Activated naive CD4-positive, alpha-beta T cell treated with anti-CD3 and anti-CD28 coated beads, Interleukin-2, amount 10 ng/mL, durations not matched to agents 7 days and 5 days (primary cell): ENCODE measurements at regions of chr10 and their contacts with region 1.

Region 1: GRCh38 chr10:114470956-114471905 is 66.9 kb upstream of the AFAP1L2 start:
- DNase-seq: peak; percentile 74
- H3K4me3 Mint-ChIP-seq: no peak overlapping the region
- H3K27ac Mint-ChIP-seq: peak overlapping the region; percentile 0
- H3K4me1 Mint-ChIP-seq: peaks cover 33% of the 10 kb centered on the region
- H3K27me3 Mint-ChIP-seq: no peaks in the 10 kb centered on the region

Region 2: GRCh38 chr10:114458955-114459354 is 12.3 kb before region 1 on chr10:
- CTCF ChIA-PET with region 1: interaction called, 11 read pairs
- DNase-seq: peak; percentile 34
- H3K4me3 Mint-ChIP-seq: no peak overlapping the region
- H3K27ac Mint-ChIP-seq: no peak overlapping the region
- H3K4me1 Mint-ChIP-seq: peaks cover 4% of the 10 kb centered on the region
- H3K27me3 Mint-ChIP-seq: no peaks in the 10 kb centered on the region

Region 3: DNA sequence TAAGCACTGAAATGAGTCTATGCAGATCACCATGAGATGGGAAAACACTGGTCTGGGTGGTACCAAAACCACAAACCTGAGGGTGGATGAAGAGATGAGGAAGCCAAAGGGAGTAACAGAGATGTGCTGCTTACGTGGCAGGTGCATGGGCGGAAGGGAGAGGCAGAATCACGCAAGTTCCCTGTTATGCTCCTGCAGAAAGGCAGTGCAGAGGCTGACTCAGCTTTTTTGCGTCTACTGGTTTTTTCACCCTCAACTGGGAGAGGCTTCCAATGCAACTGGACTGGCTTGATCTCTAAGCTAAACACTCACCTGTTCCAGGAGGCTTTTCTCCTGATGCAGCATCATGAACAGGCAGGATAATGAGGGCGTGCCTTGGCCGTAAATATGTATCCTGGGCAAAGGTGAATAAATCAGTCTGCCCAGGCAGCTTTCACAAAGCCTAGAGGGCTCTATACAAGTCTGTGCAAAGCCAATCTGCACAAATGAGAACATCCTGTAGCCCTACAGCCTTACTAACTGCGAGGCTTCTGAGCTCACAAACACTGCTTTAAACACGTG is 28.5 kb after region 1 on chr10:
- CTCF ChIA-PET with region 1: interaction called, 14 read pairs
- DNase-seq: peak; percentile 73
- H3K4me3 Mint-ChIP-seq: peak overlapping the region; percentile 31
- H3K27ac Mint-ChIP-seq: peak overlapping the region; percentile 92
- H3K4me1 Mint-ChIP-seq: peaks cover 89% of the 10 kb centered on the region
- H3K27me3 Mint-ChIP-seq: no peaks in the 10 kb centered on the region

Region 4: GRCh38 chr10:114526504-114527238 is 55.4 kb after region 1 on chr10:
- CTCF ChIA-PET with region 1: interaction called, 59 read pairs
- DNase-seq: peak; percentile 95
- H3K4me3 Mint-ChIP-seq: peak overlapping the region; percentile 95
- H3K27ac Mint-ChIP-seq: peak overlapping the region; percentile 98
- H3K4me1 Mint-ChIP-seq: peaks cover 64% of the 10 kb centered on the region
- H3K27me3 Mint-ChIP-seq: peaks cover 4% of the 10 kb centered on the region

Region 5: GRCh38 chr10:114565066-114565465 is 93.8 kb after region 1 on chr10:
- CTCF ChIA-PET with region 1: no interaction called
- DNase-seq: no peak
- H3K4me3 Mint-ChIP-seq: no peak overlapping the region
- H3K27ac Mint-ChIP-seq: no peak overlapping the region
- H3K4me1 Mint-ChIP-seq: no peaks in the 10 kb centered on the region
- H3K27me3 Mint-ChIP-seq: peaks cover 4% of the 10 kb centered on the region

Region 6: DNA sequence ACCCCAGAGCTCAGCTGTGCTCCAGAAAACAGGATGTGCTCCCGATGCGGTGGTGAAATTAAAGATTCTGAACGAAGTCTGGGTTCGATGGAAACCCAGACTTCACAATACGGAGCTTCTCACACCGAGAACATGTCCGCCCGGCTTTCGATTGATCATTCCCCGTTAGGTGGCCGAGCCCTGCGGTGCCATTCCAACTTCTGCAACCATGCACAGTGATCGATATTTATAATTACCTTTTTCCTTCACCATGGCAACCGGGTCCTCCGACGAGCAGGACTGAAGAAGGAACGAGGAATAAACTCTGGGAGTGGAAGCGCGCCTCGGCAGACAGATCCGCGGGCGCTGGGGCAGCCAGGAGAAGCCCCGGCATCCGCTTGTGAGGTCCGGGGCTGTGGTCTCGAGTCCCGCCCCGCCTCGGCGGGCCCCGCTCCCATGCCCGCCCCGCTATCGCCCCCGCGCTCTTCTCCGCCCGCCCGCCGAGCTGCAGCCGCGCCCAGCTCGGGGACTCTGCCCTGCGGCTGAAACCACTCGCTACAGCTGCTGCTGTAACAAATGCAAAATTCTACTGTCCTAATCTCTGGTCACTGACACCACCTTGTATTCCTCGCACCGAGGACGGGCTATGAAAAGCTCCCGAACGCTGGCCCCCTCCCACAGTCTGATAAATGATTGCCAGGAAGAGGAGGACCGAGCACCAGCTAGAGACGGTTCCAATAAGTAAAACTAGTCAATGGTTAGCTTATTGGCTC is 160.6 kb after region 1 on chr10:
- CTCF ChIA-PET with region 1: no interaction called
- DNase-seq: peak; percentile 31
- H3K4me3 Mint-ChIP-seq: peak overlapping the region; percentile 71
- H3K27ac Mint-ChIP-seq: no peak overlapping the region
- H3K4me1 Mint-ChIP-seq: peaks cover 16% of the 10 kb centered on the region
- H3K27me3 Mint-ChIP-seq: peaks cover 44% of the 10 kb centered on the region

Region 7: GRCh38 chr10:114694752-114695151 is 223.5 kb after region 1 on chr10:
- CTCF ChIA-PET with region 1: interaction called, 23 read pairs
- DNase-seq: peak; percentile 30
- H3K4me3 Mint-ChIP-seq: no peak overlapping the region
- H3K27ac Mint-ChIP-seq: no peak overlapping the region
- H3K4me1 Mint-ChIP-seq: peaks cover 11% of the 10 kb centered on the region
- H3K27me3 Mint-ChIP-seq: peaks cover 36% of the 10 kb centered on the region